MCF 10A (cell line): ENCODE measurements at regions of chr5 and their contacts with region 1.

Region 1: GRCh38 chr5:72366324-72366976 is 46.3 kb downstream of the PTCD2 start:
- DNase-seq: peak; percentile 80
- H3K4me3 Mint-ChIP-seq: no peak overlapping the region
- H3K27ac Mint-ChIP-seq: no peak overlapping the region
- H3K4me1 Mint-ChIP-seq: peaks cover 39% of the 10 kb centered on the region
- H3K27me3 Mint-ChIP-seq: no peaks in the 10 kb centered on the region
- CTCF ChIP-seq: peak; percentile 73

Region 2: DNA sequence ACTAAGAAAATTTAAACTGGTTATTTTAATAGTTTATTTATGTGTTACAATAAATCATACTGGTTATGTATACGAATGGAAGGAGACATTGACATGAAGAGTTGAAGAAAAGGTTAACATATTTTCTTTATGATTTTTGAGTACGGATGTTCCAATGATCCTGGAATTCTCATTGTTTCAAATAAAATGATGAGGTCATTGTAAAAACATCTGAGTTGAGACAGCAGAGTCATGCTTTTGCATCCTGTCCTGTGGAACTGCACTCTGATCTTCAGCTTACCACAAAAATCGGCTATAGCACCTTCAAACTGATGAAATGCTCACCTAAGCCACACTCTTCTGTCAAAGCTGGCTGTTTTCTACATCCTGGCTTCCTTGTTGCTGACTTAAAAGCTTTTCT is 21.5 kb after region 1 on chr5:
- CTCF ChIA-PET with region 1: interaction called, 11 read pairs
- POLR2A ChIA-PET with region 1: interaction called, 13 read pairs
- intact Hi-C with region 1: no loop called
- DNase-seq: peak; percentile 71
- H3K4me3 Mint-ChIP-seq: peak overlapping the region; percentile 20
- H3K27ac Mint-ChIP-seq: peak overlapping the region; percentile 91
- H3K4me1 Mint-ChIP-seq: peaks cover 65% of the 10 kb centered on the region
- H3K27me3 Mint-ChIP-seq: no peaks in the 10 kb centered on the region
- CTCF ChIP-seq: no peak

Region 3: GRCh38 chr5:72436796-72437471 is 70.5 kb after region 1 on chr5:
- CTCF ChIA-PET with region 1: interaction called, 12 read pairs
- POLR2A ChIA-PET with region 1: interaction called, 30 read pairs
- intact Hi-C with region 1: loop called (anchors 10 kb)
- DNase-seq: peak; percentile 38
- H3K4me3 Mint-ChIP-seq: no peak overlapping the region
- H3K27ac Mint-ChIP-seq: peak overlapping the region; percentile 93
- H3K4me1 Mint-ChIP-seq: peaks cover 67% of the 10 kb centered on the region
- H3K27me3 Mint-ChIP-seq: no peaks in the 10 kb centered on the region
- CTCF ChIP-seq: no peak

Region 4: DNA sequence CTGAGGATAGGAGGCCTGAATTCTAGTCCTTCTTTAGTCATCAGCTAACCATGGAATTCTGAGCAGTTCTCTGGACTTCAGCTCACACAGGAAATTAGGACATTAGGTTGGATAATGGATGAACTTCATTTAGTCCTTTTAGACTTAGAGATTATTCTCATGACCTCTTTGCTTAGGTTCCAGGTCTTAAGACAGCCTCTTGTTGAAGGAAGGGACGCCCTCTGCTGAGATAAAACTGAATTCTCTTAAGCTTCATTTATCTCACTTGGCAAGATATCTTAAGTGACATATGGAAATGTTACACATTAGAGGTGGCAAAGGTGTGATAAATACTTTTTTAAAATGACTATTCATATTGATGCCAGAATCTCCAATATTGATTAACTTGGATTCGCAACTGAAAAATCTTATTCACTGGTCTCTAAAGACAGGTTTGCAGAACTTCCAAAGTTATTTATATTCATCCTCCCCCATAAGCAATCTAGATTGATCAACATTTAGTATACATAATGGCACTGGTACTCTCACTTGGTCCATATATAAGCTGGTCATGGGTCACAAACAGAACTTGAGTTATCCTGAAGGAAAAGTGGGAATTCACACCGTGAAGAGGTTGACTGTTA is 157.6 kb after region 1 on chr5:
- CTCF ChIA-PET with region 1: interaction called, 124 read pairs
- POLR2A ChIA-PET with region 1: interaction called, 74 read pairs
- intact Hi-C with region 1: loop called (anchors 1 kb)
- DNase-seq: peak; percentile 78
- H3K4me3 Mint-ChIP-seq: no peak overlapping the region
- H3K27ac Mint-ChIP-seq: no peak overlapping the region
- H3K4me1 Mint-ChIP-seq: peaks cover 12% of the 10 kb centered on the region
- H3K27me3 Mint-ChIP-seq: no peaks in the 10 kb centered on the region
- CTCF ChIP-seq: peak; percentile 67